ENCODE measurements at regions of chr2 and their contacts with region 1.

Region 1: GRCh38 chr2:229282758-229283546 is 11.9 kb upstream of the PID1 start:
- DNase-seq: peak; percentile 95 to 99 (median 99)
- H3K4me3 ChIP-seq: no peak overlapping the region
- H3K4me3 Mint-ChIP-seq: no peak overlapping the region
- H3K27ac ChIP-seq: peak overlapping the region in 1 of 2 donors; percentile 84
- H3K27ac Mint-ChIP-seq: peak overlapping the region; percentile 85 to 95 (median 91)
- H3K4me1 ChIP-seq: peaks cover 15 to 27% of the 10 kb centered on the region in 2 donors
- H3K4me1 Mint-ChIP-seq: peaks cover 23% of the 10 kb centered on the region
- H3K27me3 ChIP-seq: peaks cover 0 to 2% of the 10 kb centered on the region in 2 donors
- H3K27me3 Mint-ChIP-seq: peaks cover 0 to 3% (median 3%) of the 10 kb centered on the region in 3 donors
- CTCF ChIP-seq: no peak

Region 2: GRCh38 chr2:228072669-228073068 is 1210.3 kb before region 1 on chr2:
- intact Hi-C with region 1: no loop called
- DNase-seq: no peak
- H3K4me3 ChIP-seq: no peak overlapping the region
- H3K4me3 Mint-ChIP-seq: no peak overlapping the region
- H3K27ac ChIP-seq: no peak overlapping the region
- H3K27ac Mint-ChIP-seq: no peak overlapping the region
- H3K4me1 ChIP-seq: no peaks in the 10 kb centered on the region
- H3K4me1 Mint-ChIP-seq: no peaks in the 10 kb centered on the region
- H3K27me3 ChIP-seq: no peaks in the 10 kb centered on the region
- H3K27me3 Mint-ChIP-seq: peaks cover 0 to 2% (median 1%) of the 10 kb centered on the region in 3 donors
- CTCF ChIP-seq: no peak

Region 3: DNA sequence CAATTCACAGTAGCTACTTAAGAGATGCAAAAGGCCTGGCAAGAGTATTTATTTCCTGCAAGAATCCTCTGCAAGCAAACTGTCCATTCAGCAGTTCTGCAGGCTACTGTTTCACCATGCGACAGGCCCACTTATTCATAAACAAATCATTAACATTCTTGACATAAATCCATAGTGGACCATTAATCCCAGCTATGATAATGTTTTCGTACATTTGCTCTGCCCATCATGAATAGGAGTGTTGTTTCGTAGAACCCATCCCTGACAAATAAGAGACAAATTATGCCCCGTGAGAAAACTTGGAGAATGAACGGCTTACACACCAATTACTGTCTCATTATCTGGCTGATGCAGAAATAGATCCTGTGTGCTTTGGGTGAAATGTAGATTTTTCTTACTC is 77.2 kb before region 1 on chr2:
- intact Hi-C with region 1: no loop called
- DNase-seq: no peak
- H3K4me3 ChIP-seq: no peak overlapping the region
- H3K4me3 Mint-ChIP-seq: no peak overlapping the region
- H3K27ac ChIP-seq: no peak overlapping the region
- H3K27ac Mint-ChIP-seq: no peak overlapping the region
- H3K4me1 ChIP-seq: no peaks in the 10 kb centered on the region
- H3K4me1 Mint-ChIP-seq: no peaks in the 10 kb centered on the region
- H3K27me3 ChIP-seq: no peaks in the 10 kb centered on the region
- H3K27me3 Mint-ChIP-seq: peaks cover 0 to 1% (median 0%) of the 10 kb centered on the region in 3 donors
- CTCF ChIP-seq: no peak

Region 4: DNA sequence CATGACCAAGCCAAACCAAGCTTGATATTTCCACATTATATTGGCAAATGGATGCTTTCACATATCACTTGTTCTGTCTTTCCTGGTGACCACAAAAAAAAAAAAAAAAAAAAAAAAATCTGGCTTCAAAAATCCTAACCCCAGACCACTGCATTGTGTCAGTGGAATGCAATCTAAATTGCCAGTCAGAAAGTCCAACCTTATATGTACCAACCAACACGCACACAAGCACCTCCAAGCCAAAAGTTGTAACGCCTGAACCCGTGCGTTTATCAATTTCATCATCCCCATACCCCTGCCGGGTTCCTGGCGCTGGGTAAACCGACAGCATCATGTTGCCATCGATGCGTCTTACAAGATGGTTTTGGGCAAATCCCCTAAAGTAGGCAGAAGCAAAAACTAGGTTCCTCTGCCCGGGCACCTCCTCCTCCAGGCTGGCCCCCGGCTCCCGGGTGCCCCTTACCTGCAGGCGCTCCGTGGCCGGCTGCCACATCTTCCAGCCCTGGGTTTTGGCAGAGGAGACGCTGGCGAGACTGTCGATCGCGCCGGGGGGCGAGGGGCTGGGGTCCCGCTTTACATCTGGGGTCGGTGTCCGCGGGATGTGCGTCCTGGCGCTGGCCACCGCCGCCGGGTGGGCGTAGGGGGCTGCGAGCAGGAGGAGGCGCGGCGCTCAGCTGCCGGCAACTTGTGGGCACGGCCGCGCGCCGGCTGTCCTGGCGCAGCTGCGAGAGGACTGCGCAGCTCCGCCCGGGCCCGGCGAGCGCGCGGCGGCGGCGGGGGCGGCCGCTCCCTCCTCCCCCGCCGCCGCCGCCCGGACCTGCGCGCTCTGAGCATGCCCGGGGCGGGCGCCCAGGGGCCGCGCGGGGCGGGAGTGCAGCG is 12.2 kb before region 1 on chr2 and contains the start of gene PID1:
- intact Hi-C with region 1: no loop called
- DNase-seq: peak; percentile 36 to 50 (median 43)
- H3K4me3 ChIP-seq: peak within 1 kb of the TSS; percentile 78 to 97 (median 83)
- H3K4me3 Mint-ChIP-seq: peak within 1 kb of the TSS; percentile 91 to 94
- H3K27ac ChIP-seq: peak within 1 kb of the TSS in 1 of 2 donors; percentile 82
- H3K27ac Mint-ChIP-seq: peak within 1 kb of the TSS; percentile 13 to 92 (median 80)
- H3K4me1 ChIP-seq: peaks cover 39 to 65% of the 10 kb centered on the region in 2 donors
- H3K4me1 Mint-ChIP-seq: peaks cover 66% of the 10 kb centered on the region
- H3K27me3 ChIP-seq: peaks cover 43 to 52% of the 10 kb centered on the region in 2 donors
- H3K27me3 Mint-ChIP-seq: peaks cover 45 to 59% (median 54%) of the 10 kb centered on the region in 3 donors
- CTCF ChIP-seq: no peak
- polyA plus RNA-seq, gene PID1: 61.8 to 117 (median 62.3) TPM

Region 5: DNA sequence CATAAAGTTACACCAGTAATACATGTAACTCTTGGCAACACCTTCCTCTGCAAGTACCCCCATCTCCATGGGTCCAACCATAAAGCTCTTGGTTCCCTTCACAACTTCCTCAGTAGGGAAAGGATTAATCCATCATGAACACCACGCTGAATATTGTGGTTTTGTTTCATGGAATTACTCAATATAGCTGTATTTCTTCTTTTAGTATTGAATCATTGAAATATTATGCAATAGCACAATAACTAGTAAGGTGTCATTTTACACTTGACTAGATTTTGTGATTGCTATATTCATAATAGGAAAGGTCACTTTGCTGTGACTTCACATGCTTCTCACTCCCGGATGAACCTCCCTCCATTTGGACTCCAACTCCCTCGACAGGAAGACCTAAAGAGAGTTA is 17.8 kb after region 1 on chr2:
- intact Hi-C with region 1: loop called in 1 of 2 experiments (anchors 2 kb)
- DNase-seq: peak; percentile 83 to 97 (median 90)
- H3K4me3 ChIP-seq: no peak overlapping the region
- H3K4me3 Mint-ChIP-seq: peak overlapping the region; percentile 4 to 49
- H3K27ac ChIP-seq: peak overlapping the region; percentile 95 to 100
- H3K27ac Mint-ChIP-seq: peak overlapping the region; percentile 100
- H3K4me1 ChIP-seq: peaks cover 63 to 78% of the 10 kb centered on the region in 2 donors
- H3K4me1 Mint-ChIP-seq: peaks cover 69% of the 10 kb centered on the region
- H3K27me3 ChIP-seq: no peaks in the 10 kb centered on the region
- H3K27me3 Mint-ChIP-seq: peaks cover 0 to 6% (median 2%) of the 10 kb centered on the region in 3 donors
- CTCF ChIP-seq: no peak